ENCODE measurements at regions of chr4 and their contacts with region 1.

Region 1: GRCh38 chr4:78612398-78613178 is 61.0 kb downstream of the ANXA3 start:
- DNase-seq: no peak
- ATAC-seq: peak; percentile 28
- H3K4me3 Mint-ChIP-seq: peak overlapping the region; percentile 15
- H3K27ac Mint-ChIP-seq: peak overlapping the region; percentile 87
- H3K4me1 Mint-ChIP-seq: peaks cover 67% of the 10 kb centered on the region
- H3K27me3 Mint-ChIP-seq: no peaks in the 10 kb centered on the region
- CTCF ChIP-seq: peak; percentile 28

Region 2: DNA sequence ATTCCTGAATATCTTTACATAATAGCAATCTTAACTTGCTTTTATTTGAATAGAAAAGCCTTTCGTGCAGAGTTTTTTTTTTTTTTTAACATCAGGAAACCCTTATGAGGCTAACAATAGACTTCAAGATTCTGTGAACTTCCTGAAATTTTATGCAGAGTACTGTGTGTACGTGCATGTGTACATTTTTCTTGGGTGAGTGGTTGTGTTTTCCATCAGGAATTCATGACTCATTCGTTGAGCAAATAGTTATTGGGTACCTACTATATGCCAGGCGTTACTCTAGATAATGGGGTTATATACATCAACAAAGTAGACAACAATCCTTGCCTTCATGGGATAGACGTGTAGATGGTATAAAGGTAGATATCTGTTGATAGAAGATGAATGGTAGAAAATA is 690.9 kb before region 1 on chr4:
- CTCF ChIA-PET with region 1: no interaction called
- POLR2A ChIA-PET with region 1: no interaction called
- intact Hi-C with region 1: no loop called
- DNase-seq: no peak
- ATAC-seq: no peak
- H3K4me3 Mint-ChIP-seq: no peak overlapping the region
- H3K27ac Mint-ChIP-seq: no peak overlapping the region
- H3K4me1 Mint-ChIP-seq: peaks cover 16% of the 10 kb centered on the region
- H3K27me3 Mint-ChIP-seq: no peaks in the 10 kb centered on the region
- CTCF ChIP-seq: no peak

Region 3: DNA sequence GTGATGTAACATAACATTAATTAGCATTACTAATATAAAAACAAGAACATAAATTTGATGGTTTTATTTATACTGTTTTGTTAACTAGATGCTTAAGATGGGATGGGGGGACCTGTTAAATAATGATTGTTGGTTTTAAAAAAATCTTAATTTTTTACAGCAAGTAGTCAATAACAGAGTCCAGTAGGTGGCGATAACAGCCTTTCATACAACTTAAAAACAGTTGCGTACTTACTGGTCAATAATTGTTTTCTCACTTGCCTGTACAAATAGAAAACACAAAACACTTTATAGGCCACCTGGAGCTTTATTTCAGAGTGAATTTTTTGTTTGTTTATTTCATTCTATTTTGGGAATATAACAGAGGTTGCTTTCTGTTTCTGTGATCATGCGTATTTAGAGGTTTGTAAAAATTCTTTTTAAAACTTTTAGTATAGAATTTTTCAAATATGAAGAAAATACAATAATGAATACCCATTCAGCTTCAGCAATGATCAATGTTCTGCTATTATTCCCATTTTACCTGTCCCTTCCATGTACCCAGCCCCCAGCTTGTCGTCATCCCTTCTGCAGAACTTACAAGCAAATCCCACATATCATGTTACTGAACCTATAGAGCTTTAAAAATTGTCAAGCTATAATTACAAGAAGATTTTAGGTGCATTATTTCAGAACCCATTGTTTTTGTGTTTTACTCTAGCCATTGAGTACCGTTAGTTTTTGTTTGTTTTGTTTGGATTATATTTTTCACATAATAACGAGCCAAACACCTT is 652.8 kb before region 1 on chr4:
- CTCF ChIA-PET with region 1: no interaction called
- POLR2A ChIA-PET with region 1: no interaction called
- intact Hi-C with region 1: loop called (anchors 5 kb)
- DNase-seq: no peak
- ATAC-seq: no peak
- H3K4me3 Mint-ChIP-seq: no peak overlapping the region
- H3K27ac Mint-ChIP-seq: no peak overlapping the region
- H3K4me1 Mint-ChIP-seq: no peaks in the 10 kb centered on the region
- H3K27me3 Mint-ChIP-seq: no peaks in the 10 kb centered on the region
- CTCF ChIP-seq: peak; percentile 73

Region 4: GRCh38 chr4:78629991-78630541 is 17.5 kb after region 1 on chr4:
- CTCF ChIA-PET with region 1: interaction called, 14 read pairs
- POLR2A ChIA-PET with region 1: interaction called, 26 read pairs
- intact Hi-C with region 1: loop called (anchors 1 kb)
- DNase-seq: no peak
- ATAC-seq: peak; percentile 13
- H3K4me3 Mint-ChIP-seq: peak overlapping the region; percentile 7
- H3K27ac Mint-ChIP-seq: peak overlapping the region; percentile 94
- H3K4me1 Mint-ChIP-seq: peaks cover 88% of the 10 kb centered on the region
- H3K27me3 Mint-ChIP-seq: no peaks in the 10 kb centered on the region
- CTCF ChIP-seq: no peak

Region 5: DNA sequence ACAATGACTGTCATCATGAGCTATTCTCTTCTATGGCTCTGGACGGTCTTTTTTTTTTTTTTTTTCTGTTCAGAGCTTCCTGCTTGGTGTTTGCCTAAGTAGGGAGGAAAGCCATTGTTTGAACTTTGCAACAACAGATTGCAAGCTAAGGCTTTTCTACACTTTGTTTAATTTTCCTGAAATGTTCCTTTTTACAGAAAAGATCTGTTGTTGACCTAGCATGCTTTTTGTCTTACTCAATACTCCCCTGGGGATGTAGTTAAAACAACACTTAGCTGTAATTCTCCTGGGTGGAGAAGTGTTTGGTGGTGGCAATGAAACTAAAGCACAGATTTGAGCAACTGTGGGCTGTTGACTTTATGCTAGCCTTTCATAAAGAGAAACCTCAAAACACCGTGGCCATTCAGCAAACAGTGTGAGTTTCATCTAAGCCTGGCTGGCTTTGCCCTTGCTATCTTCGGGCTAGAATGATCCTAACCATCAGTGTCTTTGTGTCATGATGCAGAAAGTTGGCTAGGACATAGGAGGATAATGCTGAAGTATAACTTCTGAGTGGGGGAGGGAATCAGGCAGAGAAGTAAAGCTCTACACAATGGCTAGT is 49.4 kb after region 1 on chr4:
- CTCF ChIA-PET with region 1: interaction called, 4 read pairs
- POLR2A ChIA-PET with region 1: interaction called, 10 read pairs
- intact Hi-C with region 1: loop called (anchors 1 kb)
- DNase-seq: no peak
- ATAC-seq: peak; percentile 51
- H3K4me3 Mint-ChIP-seq: peak overlapping the region; percentile 57
- H3K27ac Mint-ChIP-seq: peak overlapping the region; percentile 83
- H3K4me1 Mint-ChIP-seq: peaks cover 78% of the 10 kb centered on the region
- H3K27me3 Mint-ChIP-seq: no peaks in the 10 kb centered on the region
- CTCF ChIP-seq: no peak

Region 6: GRCh38 chr4:78749972-78750727 is 137.6 kb after region 1 on chr4:
- CTCF ChIA-PET with region 1: interaction called, 5 read pairs
- POLR2A ChIA-PET with region 1: interaction called, 13 read pairs
- intact Hi-C with region 1: loop called (anchors 1 kb)
- DNase-seq: no peak
- ATAC-seq: peak; percentile 83
- H3K4me3 Mint-ChIP-seq: peak overlapping the region; percentile 74
- H3K27ac Mint-ChIP-seq: peak overlapping the region; percentile 93
- H3K4me1 Mint-ChIP-seq: peaks cover 72% of the 10 kb centered on the region
- H3K27me3 Mint-ChIP-seq: no peaks in the 10 kb centered on the region
- CTCF ChIP-seq: no peak

Region 7: GRCh38 chr4:78938868-78939666 is 326.5 kb after region 1 on chr4 and contains the start of gene PAQR3:
- CTCF ChIA-PET with region 1: no interaction called
- POLR2A ChIA-PET with region 1: no interaction called
- intact Hi-C with region 1: loop called (anchors 5 kb)
- DNase-seq: peak; percentile 90
- ATAC-seq: peak; percentile 98
- H3K4me3 Mint-ChIP-seq: peak within 1 kb of the TSS; percentile 96
- H3K27ac Mint-ChIP-seq: peak within 1 kb of the TSS; percentile 84
- H3K4me1 Mint-ChIP-seq: peaks cover 20% of the 10 kb centered on the region
- H3K27me3 Mint-ChIP-seq: no peaks in the 10 kb centered on the region
- CTCF ChIP-seq: no peak
- total RNA-seq, gene PAQR3: 10.2 and 10.3 TPM in 2 replicates

Measured in activated B cell treated with CpG ODN at 0.5 μM for 24 hours (primary cell).